Thyroid gland (tissue), 4 donors: ENCODE measurements at regions of chr3 and their contacts with region 1.

Region 1: DNA sequence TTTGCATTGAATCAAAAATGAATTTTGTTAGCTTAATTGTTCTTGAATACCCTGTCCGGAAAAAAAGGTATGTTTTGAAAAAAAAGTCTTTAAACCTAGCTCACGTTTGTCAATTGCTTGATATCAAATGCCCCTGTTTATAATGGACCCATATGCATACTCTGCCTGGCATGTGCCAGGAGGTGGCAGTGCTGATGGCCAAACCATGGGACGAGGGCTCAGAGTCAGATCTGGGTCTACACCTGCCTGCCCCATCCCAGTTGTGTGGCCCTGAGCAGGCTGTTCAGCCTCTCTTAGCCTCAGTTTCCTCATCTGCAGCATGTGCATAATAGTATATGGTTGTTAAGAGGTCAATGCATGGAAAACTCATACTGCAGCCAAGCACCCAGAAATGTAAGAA is 38.8 kb downstream of the PRKCD start:
- DNase-seq: no peak
- H3K4me3 ChIP-seq: no peak overlapping the region
- H3K27ac ChIP-seq: no peak overlapping the region
- H3K4me1 ChIP-seq: peaks cover 14% of the 10 kb centered on the region in 2 donors
- H3K27me3 ChIP-seq: no peaks in the 10 kb centered on the region
- CTCF ChIP-seq: no peak
- POLR2A ChIP-seq: no peak

Region 2: DNA sequence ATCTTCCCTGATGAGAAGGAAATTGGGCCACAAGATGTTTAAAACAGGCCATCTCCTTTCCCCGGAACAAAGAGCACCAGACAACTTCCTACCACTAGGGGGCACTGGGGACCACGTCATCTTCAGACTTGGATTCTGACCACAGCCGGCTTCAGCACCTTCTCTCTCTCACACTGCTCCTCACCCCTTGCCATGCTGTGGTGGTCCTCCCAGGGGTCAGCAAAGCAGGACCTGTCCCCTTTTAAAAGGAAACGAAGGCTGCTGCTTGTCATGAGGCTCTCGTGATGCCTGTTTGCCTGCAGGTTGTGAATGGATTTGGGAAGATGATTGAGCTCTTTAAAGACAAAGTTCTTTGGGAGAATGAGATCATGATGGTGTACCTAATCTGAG is 85.8 kb before region 1 on chr3:
- intact Hi-C with region 1: loop called (anchors 2 kb)
- DNase-seq: peak; percentile 83 to 86
- H3K4me3 ChIP-seq: no peak overlapping the region
- H3K27ac ChIP-seq: peak overlapping the region; percentile 51 to 85 (median 59)
- H3K4me1 ChIP-seq: peaks cover 4 to 24% of the 10 kb centered on the region in 2 donors
- H3K27me3 ChIP-seq: no peaks in the 10 kb centered on the region
- CTCF ChIP-seq: peak; percentile 86 to 98 (median 92)
- POLR2A ChIP-seq: no peak